Posterior cingulate gyrus (tissue), 11 donors: ENCODE measurements at regions of chr11 and their contacts with region 1.

Region 1: GRCh38 chr11:73242251-73243079 is 24.4 kb downstream of the P2RY2 start:
- DNase-seq: peak; percentile 33 to 97 (median 78)

Region 2: DNA sequence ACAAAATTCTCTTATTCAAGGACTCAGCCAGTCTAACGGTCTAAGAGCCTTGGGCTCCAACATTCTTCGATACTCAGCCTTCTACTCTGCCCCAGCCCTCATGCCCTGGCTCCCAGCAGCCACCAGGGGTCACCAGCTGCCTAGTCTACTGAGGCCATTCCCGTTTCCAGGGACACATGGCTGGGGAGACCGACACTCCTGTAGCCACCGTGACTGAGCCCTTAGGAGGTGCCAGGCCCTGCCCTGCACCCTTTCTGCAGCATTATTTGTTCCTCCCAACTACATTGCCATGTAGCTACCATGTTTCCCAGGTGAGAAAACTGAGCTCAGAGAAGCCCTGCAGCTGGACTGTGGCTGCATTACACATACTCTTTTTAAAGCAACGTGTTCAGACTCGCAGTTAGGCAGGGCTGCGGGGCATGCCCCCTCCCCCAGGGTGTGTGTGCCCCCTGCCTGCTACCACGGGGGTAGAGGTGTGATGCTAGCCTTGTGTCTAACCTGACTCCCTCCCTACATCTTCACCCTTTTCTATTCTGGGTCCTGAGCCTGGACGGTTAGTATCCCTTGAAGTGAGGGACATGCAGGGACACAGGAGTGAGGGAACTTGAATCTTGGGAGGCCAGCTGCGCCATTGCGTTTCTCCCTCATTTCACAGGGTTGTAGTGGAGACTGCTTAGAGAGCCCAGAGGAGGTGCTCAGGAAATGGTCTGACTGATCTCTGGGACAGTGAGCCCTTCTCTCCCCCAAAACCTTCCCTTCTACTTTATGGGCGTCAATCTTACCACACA is 410.8 kb before region 1 on chr11:
- intact Hi-C with region 1: loop called (anchors 5 kb)
- DNase-seq: peak; percentile 76 to 98 (median 90)

Region 3: GRCh38 chr11:72924568-72925190 is 317.8 kb before region 1 on chr11:
- intact Hi-C with region 1: loop called (anchors 5 kb)
- DNase-seq: no peak

Region 4: GRCh38 chr11:73184953-73185671 is 57.4 kb before region 1 on chr11:
- intact Hi-C with region 1: loop called (anchors 2 kb)
- DNase-seq: peak in 7 of 10 donors; percentile 32 to 92 (median 63)